Ovary (tissue), 10 donors: ENCODE measurements at regions of chr10 and their contacts with region 1.

Region 1: GRCh38 chr10:101782811-101783735 is at the start of gene NPM3:
- DNase-seq: peak; percentile 74 to 83 (median 78)
- H3K4me3 ChIP-seq: peak within 1 kb of the TSS; percentile 53
- H3K27ac ChIP-seq: no peak within 1 kb of the TSS
- H3K4me1 ChIP-seq: peaks cover 20% of the 10 kb centered on the region
- H3K27me3 ChIP-seq: no peaks in the 10 kb centered on the region
- CTCF ChIP-seq: no peak
- EP300 ChIP-seq: no peak
- POLR2A ChIP-seq: no peak
- total RNA-seq, gene NPM3: 23.1 to 64.8 (median 32.1) TPM

Region 2: GRCh38 chr10:101214446-101215396 is 568.4 kb before region 1 on chr10:
- intact Hi-C with region 1: loop called in 2 of 4 experiments (anchors 10 kb)
- DNase-seq: peak; percentile 39 to 77 (median 61)
- H3K4me3 ChIP-seq: no peak overlapping the region
- H3K27ac ChIP-seq: no peak overlapping the region
- H3K4me1 ChIP-seq: peaks cover 4% of the 10 kb centered on the region
- H3K27me3 ChIP-seq: no peaks in the 10 kb centered on the region
- CTCF ChIP-seq: peak; percentile 45 to 64 (median 53)
- EP300 ChIP-seq: no peak
- POLR2A ChIP-seq: no peak

Region 3: GRCh38 chr10:101373063-101373462 is 410.0 kb before region 1 on chr10:
- intact Hi-C with region 1: no loop called
- DNase-seq: no peak
- H3K4me3 ChIP-seq: no peak overlapping the region
- H3K27ac ChIP-seq: no peak overlapping the region
- H3K4me1 ChIP-seq: no peaks in the 10 kb centered on the region
- H3K27me3 ChIP-seq: no peaks in the 10 kb centered on the region
- CTCF ChIP-seq: no peak
- EP300 ChIP-seq: no peak
- POLR2A ChIP-seq: no peak

Region 4: DNA sequence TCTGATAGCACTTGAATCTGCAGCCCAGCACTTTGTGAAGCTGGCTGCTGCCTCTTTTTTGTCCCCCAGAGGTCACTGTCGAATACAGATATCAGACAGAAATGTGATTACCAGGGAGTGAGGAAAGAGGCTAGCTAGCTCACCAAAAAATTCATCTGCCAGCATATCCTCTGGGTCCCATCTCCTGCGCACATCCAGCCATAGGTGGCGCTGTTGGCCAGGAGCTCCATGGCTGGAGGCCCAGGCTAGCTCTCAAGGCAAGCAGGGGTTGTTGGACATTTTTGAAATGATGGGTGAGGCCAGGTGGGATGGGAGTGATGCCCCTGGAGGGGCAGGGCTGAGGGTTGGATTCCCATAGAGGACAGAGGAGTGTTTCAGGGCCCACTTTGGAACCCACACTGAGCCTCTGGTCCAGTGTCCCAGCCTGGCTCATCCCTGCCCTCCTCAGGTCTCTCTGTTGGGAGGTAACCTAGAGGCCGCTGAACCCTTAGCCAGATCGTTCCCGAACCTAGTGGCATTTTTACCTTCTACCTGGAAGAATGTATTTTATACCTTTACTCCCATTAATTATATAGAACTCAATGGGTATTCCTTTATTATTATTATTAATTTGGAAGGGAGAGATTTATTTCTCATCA is 180.2 kb before region 1 on chr10:
- intact Hi-C with region 1: loop called (anchors 5 to 10 kb)
- DNase-seq: peak; percentile 57 to 80 (median 70)
- H3K4me3 ChIP-seq: no peak overlapping the region
- H3K27ac ChIP-seq: no peak overlapping the region
- H3K4me1 ChIP-seq: no peaks in the 10 kb centered on the region
- H3K27me3 ChIP-seq: no peaks in the 10 kb centered on the region
- CTCF ChIP-seq: peak; percentile 56 to 67 (median 63)
- EP300 ChIP-seq: no peak
- POLR2A ChIP-seq: no peak

Region 5: GRCh38 chr10:102009801-102010425 is 226.8 kb after region 1 on chr10:
- intact Hi-C with region 1: loop called in 2 of 4 experiments (anchors 10 kb)
- DNase-seq: peak in 3 of 5 donors; percentile 30 to 57 (median 31)
- H3K4me3 ChIP-seq: no peak overlapping the region
- H3K27ac ChIP-seq: no peak overlapping the region
- H3K4me1 ChIP-seq: no peaks in the 10 kb centered on the region
- H3K27me3 ChIP-seq: no peaks in the 10 kb centered on the region
- CTCF ChIP-seq: peak; percentile 51 to 85 (median 72)
- EP300 ChIP-seq: no peak
- POLR2A ChIP-seq: no peak

Region 6: GRCh38 chr10:102300278-102300843 is 517.3 kb after region 1 on chr10:
- intact Hi-C with region 1: loop called in 1 of 4 experiments (anchors 5 kb)
- DNase-seq: no peak
- H3K4me3 ChIP-seq: no peak overlapping the region
- H3K27ac ChIP-seq: no peak overlapping the region
- H3K4me1 ChIP-seq: peaks cover 2% of the 10 kb centered on the region
- H3K27me3 ChIP-seq: no peaks in the 10 kb centered on the region
- CTCF ChIP-seq: no peak
- EP300 ChIP-seq: no peak
- POLR2A ChIP-seq: no peak